K562 (cell line): ENCODE measurements at regions of chr1 and their contacts with region 1.

Region 1: DNA sequence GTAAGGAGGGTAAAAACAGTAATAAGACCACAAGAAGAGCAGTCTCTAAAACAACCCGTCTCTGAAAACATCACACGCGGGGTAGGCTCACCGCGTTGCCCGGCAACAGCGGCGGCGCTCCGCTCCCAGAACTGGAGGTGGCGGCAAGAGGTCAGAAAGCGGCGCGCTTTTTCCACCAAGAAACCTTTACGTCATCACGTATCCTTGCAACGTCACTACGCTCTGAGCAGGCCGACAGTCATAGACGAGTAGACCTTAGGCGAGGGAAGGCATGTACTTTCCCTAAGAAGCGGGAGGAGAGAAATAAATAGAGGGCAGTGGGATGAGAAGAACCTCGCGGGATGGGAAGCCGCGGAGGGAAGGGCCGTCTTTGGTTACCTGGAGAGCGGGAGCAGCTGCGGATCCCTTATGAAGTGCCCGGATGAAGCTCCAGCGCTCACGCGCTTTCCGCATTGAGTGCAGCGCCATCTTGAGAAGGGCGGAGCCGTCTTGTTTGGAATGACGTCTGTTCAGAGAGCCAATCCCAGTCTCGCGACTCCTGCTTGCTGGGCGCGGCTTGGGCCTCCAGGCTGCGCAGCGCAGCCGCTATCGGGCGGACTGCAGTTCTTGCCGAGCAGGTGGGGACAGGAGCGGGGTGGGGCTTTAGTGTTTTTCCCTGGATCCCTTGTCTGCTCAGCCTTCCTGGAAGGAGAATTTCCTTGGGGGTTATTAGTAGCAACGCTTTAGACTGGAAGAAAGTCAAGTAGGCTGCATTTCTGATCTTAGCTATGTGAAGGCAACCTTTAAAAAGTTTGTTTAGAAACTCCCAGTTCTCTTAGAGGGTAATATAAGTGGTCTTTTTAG is at the start of gene WARS2:
- DNase-seq: peak; percentile 92 to 99 (median 92)
- ATAC-seq: peak; percentile 98
- H3K4me3 ChIP-seq: peak within 1 kb of the TSS; percentile 54
- H3K27ac ChIP-seq: peak within 1 kb of the TSS; percentile 92
- H3K4me1 ChIP-seq: peaks cover 0 to 6% of the 10 kb centered on the region in 2 experiments; a peak in 2 of 5 replicates
- H3K27me3 ChIP-seq: no peaks in the 10 kb centered on the region
- CTCF ChIP-seq: peak in 1 of 3 experiments; percentile 28; a peak in 3 of 6 replicates
- EP300 ChIP-seq: peak; percentile 44; the same call in 1 of the 2 replicates
- POLR2A ChIP-seq: peak; percentile 98
- RAD21 ChIP-seq: peak in 1 of 2 experiments; percentile 26; a peak in 1 of 4 replicates
- polyA plus RNA-seq, gene WARS2: 5.7 to 6.7 TPM

Region 2: DNA sequence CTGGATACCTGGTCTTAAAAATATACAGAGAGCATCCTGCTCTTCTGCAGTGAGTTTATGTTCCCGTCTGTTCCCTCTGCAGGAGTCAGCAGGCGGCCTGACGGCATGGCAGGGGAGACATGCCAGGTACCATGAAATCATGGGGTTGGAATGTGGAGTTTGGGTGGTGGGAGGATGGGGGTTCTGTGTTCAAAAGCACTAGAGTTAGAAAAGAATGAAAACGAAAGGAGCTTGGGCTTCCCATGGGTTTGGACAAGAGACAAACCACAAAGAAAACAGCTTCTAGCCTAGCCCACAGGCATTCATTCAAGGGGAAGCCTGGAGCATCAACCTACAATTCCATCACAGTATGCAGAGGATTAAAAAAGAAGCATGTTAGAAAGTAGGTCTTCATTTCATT is 59.8 kb before region 1 on chr1:
- CTCF ChIA-PET with region 1: no interaction called
- POLR2A ChIA-PET with region 1: no interaction called
- in situ Hi-C with region 1: no loop called
- intact Hi-C with region 1: loop called (anchors 10 kb)
- DNase-seq: no peak
- ATAC-seq: no peak
- H3K4me3 ChIP-seq: no peak overlapping the region
- H3K27ac ChIP-seq: no peak overlapping the region
- H3K4me1 ChIP-seq: 0 out of 5 replicates have a peak, but pooled peaks cover 0 to 3% of the 10 kb centered on the region in 2 experiments
- H3K27me3 ChIP-seq: no peaks in the 10 kb centered on the region
- CTCF ChIP-seq: no peak
- EP300 ChIP-seq: no peak
- POLR2A ChIP-seq: no peak
- RAD21 ChIP-seq: no peak